ENCODE measurements at regions of chr5 and their contacts with region 1.

Region 1: GRCh38 chr5:157471709-157472108 is 11.7 kb downstream of the NIPAL4 start:
- DNase-seq: peak in 1 of 3 donors; percentile 25
- H3K4me3 ChIP-seq: no peak overlapping the region
- H3K27ac ChIP-seq: no peak overlapping the region
- H3K4me1 ChIP-seq: peaks cover 0 to 5% (median 0%) of the 10 kb centered on the region in 4 experiments
- H3K27me3 ChIP-seq: peaks cover 0 to 2% (median 0%) of the 10 kb centered on the region in 5 experiments

Region 2: DNA sequence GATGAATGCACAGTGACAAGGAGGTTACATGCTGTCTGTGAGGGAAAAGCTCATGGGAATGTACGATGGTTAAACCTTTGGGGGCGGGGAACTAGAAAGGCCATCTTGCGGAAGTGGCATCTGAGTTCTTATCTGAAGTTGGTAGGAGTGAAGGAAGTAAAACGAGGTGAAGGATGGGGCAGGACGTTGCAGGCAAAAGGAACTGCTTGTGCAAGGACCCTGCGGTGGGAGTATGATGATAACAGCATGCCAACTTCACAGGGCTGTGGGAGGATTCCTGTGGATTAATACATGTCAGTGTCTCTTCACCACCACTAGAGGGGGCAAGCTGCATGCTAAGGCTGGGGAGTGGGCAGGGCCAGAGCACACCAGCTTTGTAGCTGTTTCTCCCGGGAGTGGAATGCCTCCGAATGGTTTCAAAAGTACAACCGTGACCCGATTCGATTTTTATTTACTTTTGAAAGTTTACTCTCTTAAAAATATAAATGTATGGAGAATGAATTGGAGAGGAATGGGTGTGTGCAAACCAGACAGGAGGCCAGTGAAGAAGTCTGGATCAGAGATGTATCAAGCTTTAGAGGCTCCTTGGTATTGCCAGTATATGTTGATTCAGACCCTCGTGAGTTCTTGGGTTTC is 143.3 kb before region 1 on chr5:
- CTCF ChIA-PET with region 1: interaction called, 12 read pairs
- POLR2A ChIA-PET with region 1: no interaction called
- DNase-seq: peak; percentile 80 to 85 (median 81)
- H3K4me3 ChIP-seq: peak overlapping the region in 1 of 7 experiments; percentile 21
- H3K27ac ChIP-seq: no peak overlapping the region
- H3K4me1 ChIP-seq: peaks cover 0 to 3% (median 0%) of the 10 kb centered on the region in 4 experiments
- H3K27me3 ChIP-seq: no peaks in the 10 kb centered on the region

Region 3: DNA sequence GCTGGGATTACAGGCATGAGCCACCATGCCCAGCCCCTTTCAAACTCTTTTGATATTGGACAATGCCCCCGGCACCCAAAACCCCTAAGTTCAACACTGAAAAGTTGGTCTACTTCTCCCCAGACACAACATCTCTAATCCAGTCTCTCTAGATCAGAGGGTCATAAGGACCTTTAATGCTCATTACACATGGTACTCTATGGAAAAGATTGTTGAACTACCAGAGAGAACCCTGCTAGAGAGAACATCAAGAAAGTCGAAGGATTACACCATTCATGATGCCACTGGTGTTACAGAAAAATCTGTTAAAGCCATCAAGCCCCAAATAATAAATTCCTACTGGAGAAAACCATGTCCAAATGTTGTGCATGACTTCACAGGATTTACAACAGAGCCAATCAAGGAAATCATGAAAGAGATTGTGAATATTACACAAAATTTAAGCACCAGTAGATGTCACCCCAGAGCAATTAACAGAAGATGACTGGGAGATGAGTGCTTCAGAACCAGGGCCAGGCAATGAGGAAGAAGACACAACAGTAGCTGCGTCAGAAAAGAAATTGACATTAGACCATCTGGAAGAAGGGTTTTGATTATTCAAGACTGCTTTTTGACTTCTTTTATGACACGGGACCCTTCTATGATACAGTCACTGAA is 40.0 kb before region 1 on chr5:
- CTCF ChIA-PET with region 1: interaction called, 12 read pairs
- POLR2A ChIA-PET with region 1: no interaction called
- DNase-seq: peak; percentile 65 to 84 (median 82)
- H3K4me3 ChIP-seq: no peak overlapping the region
- H3K27ac ChIP-seq: no peak overlapping the region
- H3K4me1 ChIP-seq: peaks cover 0 to 6% (median 2%) of the 10 kb centered on the region in 4 experiments
- H3K27me3 ChIP-seq: no peaks in the 10 kb centered on the region

Region 4: GRCh38 chr5:157548513-157549297 is 77.0 kb after region 1 on chr5:
- CTCF ChIA-PET with region 1: no interaction called
- POLR2A ChIA-PET with region 1: no interaction called
- DNase-seq: no peak
- H3K4me3 ChIP-seq: no peak overlapping the region
- H3K27ac ChIP-seq: no peak overlapping the region
- H3K4me1 ChIP-seq: peaks cover 0 to 4% (median 0%) of the 10 kb centered on the region in 4 experiments
- H3K27me3 ChIP-seq: no peaks in the 10 kb centered on the region